GM13976 (cell line): ENCODE measurements at regions of chr5 and their contacts with region 1.

Region 1: DNA sequence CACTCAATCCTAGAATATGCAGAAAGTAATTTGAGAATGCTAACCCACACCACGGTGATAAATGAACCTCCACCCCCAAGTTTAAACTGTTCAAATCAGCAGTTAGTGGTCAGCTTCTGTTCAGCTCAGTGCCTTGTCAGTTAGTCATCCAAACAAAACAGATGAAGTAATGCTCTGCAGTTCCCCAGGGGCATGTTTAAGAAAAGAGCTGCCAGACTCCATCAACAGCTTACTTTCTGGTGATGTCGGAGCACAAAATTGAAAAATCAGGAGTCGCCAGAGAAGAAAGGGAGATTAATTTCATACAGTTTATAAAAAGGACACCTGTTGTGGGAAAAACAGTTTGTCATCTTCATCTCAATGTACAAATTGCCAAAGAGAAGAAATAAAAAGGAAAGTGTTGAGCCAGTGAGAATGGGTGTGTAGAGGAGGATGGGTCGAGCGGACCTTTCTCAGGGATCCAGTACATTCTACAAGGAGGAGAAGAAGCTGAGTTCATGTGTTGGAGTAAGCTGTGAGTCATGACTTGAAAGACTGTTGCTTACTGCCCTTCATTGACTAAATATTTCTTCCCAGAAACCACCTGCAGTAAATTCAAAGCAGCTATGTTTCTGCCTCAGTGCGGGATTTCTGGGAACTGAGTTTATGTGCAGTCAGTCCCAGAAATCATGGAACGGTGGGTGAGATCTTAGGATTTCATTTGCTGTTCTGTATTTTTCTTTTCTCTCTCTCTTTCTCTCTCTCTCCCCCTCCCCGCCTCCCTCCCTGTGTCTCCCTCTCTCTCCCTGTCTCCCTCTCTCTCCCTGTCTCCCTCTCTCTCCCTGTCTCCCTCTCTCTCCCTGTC is 13.7 kb downstream of the TRIO start:
- DNase-seq: peak; percentile 69
- CTCF ChIP-seq: no peak

Region 2: DNA sequence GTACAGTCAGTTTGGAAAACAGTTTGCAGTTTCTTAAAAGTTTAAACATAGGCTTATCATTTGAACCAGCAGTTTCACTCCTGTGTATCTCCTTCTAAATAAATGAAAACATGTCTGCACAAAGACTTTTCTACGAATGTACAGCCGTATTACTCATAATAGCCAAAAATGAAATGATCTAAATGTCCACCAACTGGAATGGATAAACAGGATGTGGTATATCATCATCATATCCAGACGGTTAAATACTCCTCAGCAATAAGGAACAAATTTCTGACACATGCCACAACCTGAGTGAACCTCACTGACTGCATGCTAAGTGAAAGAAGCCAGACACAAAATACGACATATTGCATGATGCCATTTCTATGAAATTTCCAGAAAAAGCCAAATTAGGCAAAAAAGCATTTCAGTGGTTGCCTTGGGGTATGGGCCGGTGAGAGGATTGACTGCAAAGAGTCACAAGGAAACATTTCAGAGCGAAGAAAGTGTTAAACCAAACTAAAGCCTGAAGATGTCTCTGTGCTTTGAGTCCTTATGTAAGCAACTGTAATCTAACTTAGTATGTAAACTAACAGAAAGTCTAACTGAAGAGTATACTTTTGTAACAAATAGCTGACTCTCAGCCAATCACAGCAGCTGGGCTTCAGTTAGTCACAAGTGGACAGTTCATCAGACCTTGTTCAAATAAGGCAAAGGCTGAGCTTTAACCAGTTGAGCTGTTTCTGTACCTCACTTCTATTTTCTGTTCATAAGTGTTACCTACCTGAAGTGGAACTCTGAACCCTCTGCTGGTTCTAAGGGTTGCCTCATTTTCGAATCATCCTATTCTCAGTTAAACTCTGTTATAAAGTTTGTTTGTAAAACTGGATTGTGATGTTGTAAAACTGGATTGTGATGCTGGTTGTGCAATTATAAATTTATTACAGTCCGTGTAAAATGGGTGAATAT is 51.5 kb after region 1 on chr5:
- in situ Hi-C with region 1: loop called (anchors 10 kb)
- DNase-seq: peak; percentile 57
- CTCF ChIP-seq: no peak

Region 3: DNA sequence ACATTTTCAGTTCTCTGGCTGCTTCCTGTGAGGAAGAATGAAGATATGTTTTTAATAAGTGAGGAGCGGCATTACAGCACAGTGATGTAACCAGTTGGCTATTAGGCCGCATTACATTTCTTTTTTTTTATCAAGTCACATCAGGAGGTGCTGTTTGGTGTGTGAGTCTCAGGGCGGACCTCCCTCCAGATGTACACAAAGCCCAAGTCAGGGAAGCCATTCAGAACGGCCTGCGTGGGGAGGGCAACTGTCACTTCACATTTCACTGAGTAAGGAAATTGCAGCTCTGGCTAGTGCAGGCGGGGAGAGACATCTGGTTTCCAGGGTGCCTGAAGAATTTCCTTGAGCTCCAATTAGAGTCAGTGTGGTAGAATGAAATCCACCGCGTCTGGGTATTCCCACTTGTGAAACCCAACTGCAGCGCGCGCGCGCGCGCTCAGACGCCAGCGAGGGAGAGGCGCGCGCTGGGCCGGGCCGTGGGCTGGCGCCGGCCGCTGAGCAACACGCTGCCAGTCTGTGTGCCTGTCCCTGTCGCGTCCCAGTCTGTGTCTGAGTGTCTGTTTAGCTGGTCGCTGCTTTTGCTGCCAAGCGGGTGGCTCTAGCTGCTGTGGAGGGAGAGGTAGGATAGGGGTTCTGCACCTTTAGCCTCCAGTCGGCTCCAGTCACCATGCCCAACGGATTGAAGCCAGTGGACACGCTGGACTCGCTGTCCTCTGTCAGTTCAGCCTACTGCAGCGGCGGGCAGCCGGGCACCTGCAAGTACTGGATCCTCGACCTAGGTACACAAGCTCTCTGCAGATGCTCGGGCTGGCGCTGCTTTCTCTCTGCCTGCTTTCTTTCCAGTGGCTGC is 283.9 kb after region 1 on chr5:
- in situ Hi-C with region 1: no loop called
- DNase-seq: no peak
- CTCF ChIP-seq: no peak

Region 4: GRCh38 chr5:14664302-14665100 is 507.6 kb after region 1 on chr5 and contains the start of gene OTULIN:
- in situ Hi-C with region 1: loop called (anchors 25 kb)
- DNase-seq: peak; percentile 97
- CTCF ChIP-seq: no peak